Endothelial cell of umbilical vein (primary cell): ENCODE measurements at regions of chr18 and their contacts with region 1.

Region 1: DNA sequence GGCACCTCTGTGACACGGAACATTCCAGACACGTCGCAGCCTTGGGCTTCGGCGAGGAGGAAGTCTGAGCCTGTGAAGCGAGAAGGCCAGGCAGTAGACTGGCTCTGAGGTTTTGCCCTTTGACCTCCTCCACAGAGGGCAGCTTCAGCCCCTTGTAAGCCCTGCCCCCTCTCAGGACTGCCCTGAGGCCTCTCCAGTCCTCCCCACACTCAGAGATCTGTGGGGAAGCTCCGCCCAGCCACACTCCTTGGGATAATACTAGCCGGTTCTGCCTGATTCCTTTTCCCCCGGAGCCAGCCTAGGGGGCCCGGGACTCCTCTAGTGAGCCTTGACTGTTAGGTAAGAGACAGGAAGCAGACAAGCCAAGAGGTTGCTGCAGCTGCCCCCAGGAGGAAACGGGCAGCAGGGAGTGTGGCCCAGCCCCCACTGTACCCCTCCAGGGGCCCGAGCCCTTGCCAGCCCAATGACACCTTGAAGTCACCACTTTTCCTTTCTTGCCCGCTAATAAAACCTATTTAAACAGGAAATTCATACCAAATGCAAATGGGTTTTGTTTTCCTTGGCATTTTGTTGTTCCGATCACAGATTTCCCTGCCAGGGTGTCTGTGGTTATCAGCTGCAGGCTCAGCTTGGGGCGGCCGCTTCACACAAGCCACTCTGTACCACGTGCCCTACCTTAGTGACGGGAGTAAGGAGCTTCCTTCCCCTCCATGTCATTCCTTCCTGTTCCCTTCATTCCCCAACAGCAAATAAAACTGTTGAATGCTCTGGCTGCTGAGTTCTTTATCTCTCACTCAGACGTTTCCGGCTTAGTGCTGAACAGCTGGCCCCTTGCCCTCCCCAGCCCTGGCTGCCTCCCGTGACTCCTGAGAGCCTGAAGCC is 124.7 kb downstream of the CABLES1 start:
- DNase-seq: peak; percentile 99
- H3K4me3 ChIP-seq: no peak overlapping the region
- H3K27ac ChIP-seq: peak overlapping the region; percentile 87
- H3K4me1 ChIP-seq: peaks cover 36% of the 10 kb centered on the region
- H3K27me3 ChIP-seq: no peaks in the 10 kb centered on the region
- CTCF ChIP-seq: no peak
- POLR2A ChIP-seq: peak; percentile 50

Region 2: DNA sequence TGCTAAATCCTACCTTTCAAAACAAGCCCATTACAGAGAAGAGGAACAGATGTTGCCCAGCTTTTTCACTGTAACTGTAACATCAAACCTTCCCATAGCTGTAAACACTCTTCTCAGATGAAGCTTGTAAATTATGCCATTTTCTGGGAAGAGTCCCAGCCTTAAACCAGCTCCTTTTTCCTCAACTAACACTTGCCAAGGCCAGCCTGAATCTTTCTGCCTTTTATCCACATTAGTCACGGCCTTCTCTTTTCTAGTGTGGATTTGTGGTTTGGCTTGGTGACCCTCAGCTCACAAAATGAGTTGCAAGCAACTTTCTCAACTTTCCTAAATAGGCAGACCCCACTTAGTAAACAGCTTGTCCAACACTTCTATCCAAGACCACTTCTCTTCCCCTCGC is 34.4 kb before region 1 on chr18:
- CTCF ChIA-PET with region 1: interaction called, 42 read pairs
- POLR2A ChIA-PET with region 1: interaction called, 12 read pairs
- dilution Hi-C with region 1: no loop called
- intact Hi-C with region 1: loop called (anchors 1 kb)
- DNase-seq: peak; percentile 75
- H3K4me3 ChIP-seq: no peak overlapping the region
- H3K27ac ChIP-seq: peak overlapping the region; percentile 98
- H3K4me1 ChIP-seq: peaks cover 52% of the 10 kb centered on the region
- H3K27me3 ChIP-seq: no peaks in the 10 kb centered on the region
- CTCF ChIP-seq: no peak
- POLR2A ChIP-seq: no peak

Region 3: GRCh38 chr18:23270986-23271680 is 11.2 kb after region 1 on chr18:
- CTCF ChIA-PET with region 1: interaction called, 3 read pairs
- POLR2A ChIA-PET with region 1: interaction called, 9 read pairs
- dilution Hi-C with region 1: no loop called
- intact Hi-C with region 1: loop called (anchors 1 kb)
- DNase-seq: peak; percentile 71
- H3K4me3 ChIP-seq: no peak overlapping the region
- H3K27ac ChIP-seq: peak overlapping the region; percentile 25
- H3K4me1 ChIP-seq: peaks cover 14% of the 10 kb centered on the region
- H3K27me3 ChIP-seq: no peaks in the 10 kb centered on the region
- CTCF ChIP-seq: no peak
- POLR2A ChIP-seq: no peak

Region 4: DNA sequence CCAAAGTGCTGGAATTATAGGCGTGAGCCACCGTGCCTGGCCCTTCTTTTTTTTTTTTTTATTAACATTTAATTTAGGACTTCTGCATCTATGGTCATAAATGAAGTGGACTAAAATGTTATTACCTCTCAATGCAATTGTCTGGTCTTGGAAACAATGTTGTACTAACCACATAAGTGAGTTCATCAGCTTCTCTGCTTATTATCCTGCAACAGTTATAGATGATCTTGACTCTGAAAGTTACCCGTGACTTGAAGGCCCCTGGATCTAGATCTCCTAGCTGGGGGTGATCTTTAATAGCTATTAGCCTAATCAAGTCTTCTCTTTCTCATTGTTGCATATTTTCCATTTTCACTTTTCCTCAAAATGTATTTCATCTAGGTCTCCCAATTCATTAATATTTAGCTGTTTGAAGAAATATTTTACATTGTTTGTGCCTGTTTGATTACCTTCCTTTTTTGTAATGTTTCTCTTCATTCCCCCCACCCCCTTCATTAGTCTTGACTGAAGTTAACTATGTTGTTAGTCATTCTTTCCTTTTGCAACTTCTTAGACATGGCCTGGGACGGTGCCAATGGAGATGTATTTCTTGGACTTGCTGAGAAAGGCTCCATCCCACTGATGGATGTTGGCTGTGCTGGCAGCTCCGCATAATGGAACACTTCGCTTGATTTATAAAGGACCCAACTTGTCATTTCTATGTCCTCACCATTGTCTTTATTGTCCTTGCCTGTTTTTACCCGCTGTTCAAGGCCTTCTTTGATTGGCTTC is 51.6 kb after region 1 on chr18:
- CTCF ChIA-PET with region 1: interaction called, 4 read pairs
- POLR2A ChIA-PET with region 1: no interaction called
- dilution Hi-C with region 1: no loop called
- intact Hi-C with region 1: loop called (anchors 1 kb)
- DNase-seq: peak; percentile 97
- H3K4me3 ChIP-seq: no peak overlapping the region
- H3K27ac ChIP-seq: peak overlapping the region; percentile 92
- H3K4me1 ChIP-seq: peaks cover 52% of the 10 kb centered on the region
- H3K27me3 ChIP-seq: no peaks in the 10 kb centered on the region
- CTCF ChIP-seq: no peak
- POLR2A ChIP-seq: peak; percentile 22

Region 5: GRCh38 chr18:23377669-23378301 is 117.8 kb after region 1 on chr18:
- CTCF ChIA-PET with region 1: interaction called, 57 read pairs
- POLR2A ChIA-PET with region 1: no interaction called
- dilution Hi-C with region 1: no loop called
- intact Hi-C with region 1: loop called (anchors 1 kb)
- DNase-seq: peak; percentile 90
- H3K4me3 ChIP-seq: no peak overlapping the region
- H3K27ac ChIP-seq: peak overlapping the region; percentile 78
- H3K4me1 ChIP-seq: peaks cover 36% of the 10 kb centered on the region
- H3K27me3 ChIP-seq: no peaks in the 10 kb centered on the region
- CTCF ChIP-seq: no peak
- POLR2A ChIP-seq: no peak